GM10248 (cell line): ENCODE measurements at regions of chr12 and their contacts with region 1.

Region 1: GRCh38 chr12:132414634-132415326 is 75.2 kb upstream of the FBRSL1 start:
- DNase-seq: peak; percentile 91
- CTCF ChIP-seq: peak; percentile 95

Region 2: GRCh38 chr12:132153501-132154340 is 261.1 kb before region 1 on chr12:
- CTCF ChIA-PET with region 1: interaction called, 26 read pairs
- POLR2A ChIA-PET with region 1: no interaction called
- DNase-seq: peak; percentile 86
- CTCF ChIP-seq: peak; percentile 94

Region 3: DNA sequence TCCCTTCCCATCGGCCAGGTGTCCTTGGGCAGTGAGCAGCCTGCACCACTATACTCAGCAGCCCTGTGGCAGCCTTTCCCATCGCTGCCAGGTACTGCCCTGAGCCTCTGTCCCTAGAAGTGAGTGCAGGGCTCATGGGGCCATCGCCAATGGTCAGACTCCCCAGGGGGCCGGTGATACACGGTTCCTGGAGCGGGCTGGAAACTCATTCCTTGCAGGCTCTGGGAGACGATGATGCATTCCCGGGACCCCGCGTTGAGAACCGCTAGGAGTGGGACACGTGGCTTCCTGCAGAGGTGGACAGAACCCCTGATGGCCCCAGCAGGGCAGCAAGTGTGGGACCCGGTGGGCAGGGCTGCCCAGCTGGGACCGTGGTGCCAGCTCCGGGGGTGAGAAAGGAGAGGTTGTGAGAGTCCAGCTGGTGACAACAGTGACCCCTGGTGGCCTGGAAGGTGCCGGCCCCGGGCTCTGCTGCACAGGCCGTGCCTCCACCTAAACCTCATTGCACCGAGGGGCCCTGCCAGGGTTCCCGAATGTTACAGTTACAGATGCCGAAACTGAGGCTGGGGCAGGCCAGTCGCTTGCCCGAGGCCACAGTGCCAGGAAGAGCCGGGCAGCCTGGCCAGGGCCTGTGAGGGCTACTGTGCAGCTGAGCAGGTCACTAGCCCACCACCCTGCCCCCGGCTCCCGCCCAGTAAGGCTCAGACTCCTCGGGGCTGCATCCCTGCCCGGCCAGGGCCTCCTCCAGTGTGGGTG is 109.0 kb after region 1 on chr12:
- CTCF ChIA-PET with region 1: interaction called, 80 read pairs
- POLR2A ChIA-PET with region 1: no interaction called
- DNase-seq: peak; percentile 90
- CTCF ChIP-seq: peak; percentile 74

Region 4: DNA sequence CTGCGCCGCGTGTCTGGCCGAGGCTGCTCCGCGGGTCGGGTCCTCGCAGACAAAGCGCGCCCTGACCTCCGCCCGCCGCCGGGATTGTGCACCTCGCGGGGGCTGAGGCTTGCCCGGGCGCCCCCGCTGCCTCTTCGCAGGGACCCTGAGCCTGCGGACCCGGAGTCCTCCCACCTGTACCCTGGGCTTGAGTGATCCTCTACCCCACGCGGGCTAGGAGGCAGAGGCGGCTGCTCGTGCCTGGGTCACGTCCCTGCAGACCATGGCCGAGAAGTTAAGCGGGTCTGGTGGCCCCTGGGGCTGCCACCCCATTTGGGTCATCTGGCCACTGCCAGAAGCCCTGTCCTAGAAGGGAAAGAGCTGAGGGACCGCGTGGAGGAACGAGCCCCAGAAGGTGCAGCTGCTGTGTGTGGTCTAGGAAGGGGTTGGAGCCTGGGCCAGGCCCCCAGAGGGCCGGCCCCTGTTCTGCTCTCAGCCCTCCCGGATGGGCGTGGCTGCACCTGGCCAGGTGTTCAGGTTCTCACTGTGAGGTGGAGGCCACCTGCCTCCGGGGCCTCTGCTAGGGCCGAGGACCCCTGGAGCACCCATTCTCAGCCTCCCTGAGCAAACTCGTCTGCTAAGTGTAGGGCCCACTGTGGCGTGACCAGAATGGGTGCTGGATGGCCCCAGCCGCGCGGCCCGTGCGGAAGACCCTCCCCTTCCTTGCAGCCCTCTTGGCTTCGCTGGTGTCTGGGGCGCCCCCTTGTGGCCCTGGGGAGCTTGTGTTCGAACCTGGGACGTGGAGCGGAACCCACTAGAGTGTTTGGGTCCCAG is 146.0 kb after region 1 on chr12:
- CTCF ChIA-PET with region 1: interaction called, 11 read pairs
- POLR2A ChIA-PET with region 1: no interaction called
- DNase-seq: peak; percentile 87
- CTCF ChIP-seq: peak; percentile 85

Region 5: GRCh38 chr12:132614861-132615578 is 200.2 kb after region 1 on chr12:
- CTCF ChIA-PET with region 1: interaction called, 38 read pairs
- POLR2A ChIA-PET with region 1: no interaction called
- DNase-seq: peak; percentile 85
- CTCF ChIP-seq: peak; percentile 82